RWPE1 (cell line): ENCODE measurements at regions of chr2 and their contacts with region 1.

Region 1: DNA sequence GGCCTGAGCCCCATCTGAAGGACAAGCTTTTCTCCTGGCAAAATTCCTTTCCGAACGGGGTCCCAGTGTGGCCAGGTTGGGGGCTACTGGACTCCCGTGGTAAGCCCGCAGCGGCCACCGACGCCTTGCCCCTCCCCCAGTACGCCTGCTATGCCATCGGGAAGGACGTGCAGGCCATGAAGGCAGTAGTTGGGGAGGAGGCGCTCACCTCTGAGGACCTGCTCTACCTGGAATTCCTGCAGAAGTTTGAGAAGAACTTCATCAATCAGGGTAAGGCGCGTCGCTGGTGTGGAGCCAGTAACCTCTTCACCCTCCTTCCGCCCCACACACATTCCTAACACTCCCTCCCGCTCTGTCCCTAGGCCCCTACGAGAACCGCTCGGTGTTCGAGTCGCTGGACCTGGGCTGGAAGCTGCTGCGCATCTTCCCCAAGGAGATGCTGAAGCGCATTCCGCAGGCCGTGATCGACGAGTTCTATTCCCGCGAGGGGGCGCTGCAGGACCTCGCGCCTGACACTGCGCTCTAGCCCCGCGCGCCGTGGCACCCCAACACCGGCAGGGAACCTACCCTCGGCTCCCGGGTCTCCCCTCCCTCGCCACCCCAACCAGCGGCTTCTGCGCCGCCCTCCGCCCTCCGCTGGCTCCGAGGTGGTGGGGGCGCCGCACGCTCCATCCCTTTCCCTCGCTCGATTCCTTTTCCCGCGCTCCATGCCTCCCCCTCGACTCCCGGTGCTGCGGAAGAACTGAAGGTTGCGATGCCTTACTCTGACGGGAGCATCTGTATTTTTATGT is 13.6 kb upstream of the ANKRD53 start:
- DNase-seq: peak; percentile 58
- H3K27ac ChIP-seq: no peak overlapping the region
- CTCF ChIP-seq: peak; percentile 84

Region 2: DNA sequence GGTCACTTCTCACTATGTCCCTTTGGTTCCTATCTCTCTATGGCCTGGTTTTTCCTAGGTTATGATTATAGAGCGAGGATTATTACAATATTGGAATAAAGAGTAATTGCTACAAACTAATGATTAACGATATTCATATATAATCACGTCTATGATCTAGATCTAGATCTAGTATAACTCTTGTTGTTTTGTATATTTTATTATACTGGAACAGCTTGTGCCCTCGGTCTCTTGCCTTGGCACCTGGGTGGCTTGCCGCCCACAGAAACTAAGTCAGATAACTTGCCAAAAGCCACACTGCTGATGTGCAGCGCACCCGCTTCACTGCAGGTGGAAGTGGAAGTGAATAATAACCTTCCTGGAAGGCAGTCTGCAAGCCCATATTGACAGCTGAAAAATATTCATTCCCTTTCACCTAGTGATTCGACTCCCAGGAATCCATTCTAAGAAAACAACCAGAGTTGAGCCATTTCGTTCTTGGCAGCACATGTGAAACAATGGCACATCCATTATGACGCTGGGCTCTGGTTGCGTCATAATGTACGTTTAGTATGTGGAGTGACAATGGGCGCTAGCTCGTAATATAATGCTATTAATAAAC is 12.9 kb after region 1 on chr2:
- CTCF ChIA-PET with region 1: interaction called, 18 read pairs
- POLR2A ChIA-PET with region 1: no interaction called
- DNase-seq: peak; percentile 34
- H3K27ac ChIP-seq: peak overlapping the region; percentile 80
- CTCF ChIP-seq: peak; percentile 52; the same call in 1 of the 2 replicates

Region 3: GRCh38 chr2:71000780-71001591 is 36.2 kb after region 1 on chr2:
- CTCF ChIA-PET with region 1: interaction called, 12 read pairs
- POLR2A ChIA-PET with region 1: no interaction called
- DNase-seq: peak; percentile 63
- H3K27ac ChIP-seq: no peak overlapping the region
- CTCF ChIP-seq: peak; percentile 96